GM10248 (cell line): ENCODE measurements at regions of chr1 and their contacts with region 1.

Region 1: GRCh38 chr1:203172128-203173010 is 3.3 kb downstream of the MYBPH start:
- DNase-seq: peak; percentile 81
- CTCF ChIP-seq: peak; percentile 85

Region 2: DNA sequence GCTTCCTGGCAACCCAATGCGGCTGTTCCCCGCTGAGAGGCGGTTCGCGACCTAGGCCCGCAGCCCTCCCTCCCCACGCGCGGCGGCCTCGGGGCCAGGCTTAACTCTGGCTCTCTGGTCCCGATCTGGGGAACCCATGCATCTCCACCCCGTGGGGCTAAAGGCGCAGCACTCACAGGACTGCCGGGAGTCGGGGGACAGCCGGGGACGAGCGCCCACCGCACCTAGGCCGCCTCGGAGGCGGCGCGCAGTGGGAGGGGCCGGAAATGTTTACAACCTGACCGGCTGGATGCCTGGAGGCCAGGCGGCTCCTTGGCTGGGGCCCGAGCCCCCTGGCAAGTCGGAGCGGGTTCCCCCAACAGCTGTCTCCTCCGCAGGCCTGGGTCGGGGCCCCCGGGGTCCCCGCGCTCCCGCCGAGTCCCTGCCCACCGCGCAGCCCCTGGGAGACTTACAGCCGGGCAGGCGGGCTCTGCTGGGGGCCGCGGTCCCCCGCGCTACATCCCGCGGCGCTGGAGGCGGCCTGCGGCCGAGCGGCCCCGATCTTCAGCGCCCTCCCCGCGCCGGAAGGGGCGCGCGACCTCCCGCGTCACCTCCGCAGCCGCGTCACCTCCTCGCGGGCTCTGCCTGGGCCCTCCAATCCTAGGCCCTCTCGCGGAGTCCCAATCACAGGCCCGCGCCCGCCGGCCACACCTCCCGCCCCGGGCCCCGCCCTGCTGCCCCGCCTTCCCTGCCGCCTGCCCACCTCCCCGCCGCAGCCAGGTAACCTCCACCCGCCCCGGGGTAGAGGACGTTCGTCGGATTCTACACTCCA is 214.4 kb before region 1 on chr1 and contains the start of gene ADIPOR1:
- CTCF ChIA-PET with region 1: no interaction called
- POLR2A ChIA-PET with region 1: no interaction called
- DNase-seq: peak; percentile 99
- CTCF ChIP-seq: peak; percentile 14

Region 3: GRCh38 chr1:203006948-203007871 is 165.2 kb before region 1 on chr1 and contains the start of gene TMEM183A:
- CTCF ChIA-PET with region 1: no interaction called
- POLR2A ChIA-PET with region 1: no interaction called
- DNase-seq: peak; percentile 94
- CTCF ChIP-seq: no peak

Region 4: GRCh38 chr1:203038891-203039608 is 133.3 kb before region 1 on chr1:
- CTCF ChIA-PET with region 1: interaction called, 86 read pairs
- POLR2A ChIA-PET with region 1: no interaction called
- DNase-seq: peak; percentile 77
- CTCF ChIP-seq: peak; percentile 90

Region 5: GRCh38 chr1:203117611-203118575 is 54.5 kb before region 1 on chr1:
- CTCF ChIA-PET with region 1: interaction called, 25 read pairs
- POLR2A ChIA-PET with region 1: no interaction called
- DNase-seq: peak; percentile 83
- CTCF ChIP-seq: peak; percentile 61

Region 6: GRCh38 chr1:203186446-203187303 is 14.3 kb after region 1 on chr1 and contains the start of gene CHI3L1:
- CTCF ChIA-PET with region 1: interaction called, 35 read pairs
- POLR2A ChIA-PET with region 1: no interaction called
- DNase-seq: no peak
- CTCF ChIP-seq: no peak

Region 7: GRCh38 chr1:203326830-203327683 is 154.7 kb after region 1 on chr1:
- CTCF ChIA-PET with region 1: no interaction called
- POLR2A ChIA-PET with region 1: no interaction called
- DNase-seq: peak; percentile 95
- CTCF ChIP-seq: peak; percentile 1